Psoas muscle (tissue), 8 donors: ENCODE measurements at regions of chr1 and their contacts with region 1.

Region 1: GRCh38 chr1:47424336-47424982 is 8.4 kb downstream of the FOXE3 start:
- DNase-seq: no peak
- ATAC-seq: peak in 1 of 4 donors; percentile 37
- H3K4me3 ChIP-seq: no peak overlapping the region
- H3K27ac ChIP-seq: no peak overlapping the region
- H3K4me1 ChIP-seq: no peaks in the 10 kb centered on the region
- H3K27me3 ChIP-seq: peaks cover 0 to 18% (median 5%) of the 10 kb centered on the region in 3 donors
- CTCF ChIP-seq: peak; percentile 49

Region 2: DNA sequence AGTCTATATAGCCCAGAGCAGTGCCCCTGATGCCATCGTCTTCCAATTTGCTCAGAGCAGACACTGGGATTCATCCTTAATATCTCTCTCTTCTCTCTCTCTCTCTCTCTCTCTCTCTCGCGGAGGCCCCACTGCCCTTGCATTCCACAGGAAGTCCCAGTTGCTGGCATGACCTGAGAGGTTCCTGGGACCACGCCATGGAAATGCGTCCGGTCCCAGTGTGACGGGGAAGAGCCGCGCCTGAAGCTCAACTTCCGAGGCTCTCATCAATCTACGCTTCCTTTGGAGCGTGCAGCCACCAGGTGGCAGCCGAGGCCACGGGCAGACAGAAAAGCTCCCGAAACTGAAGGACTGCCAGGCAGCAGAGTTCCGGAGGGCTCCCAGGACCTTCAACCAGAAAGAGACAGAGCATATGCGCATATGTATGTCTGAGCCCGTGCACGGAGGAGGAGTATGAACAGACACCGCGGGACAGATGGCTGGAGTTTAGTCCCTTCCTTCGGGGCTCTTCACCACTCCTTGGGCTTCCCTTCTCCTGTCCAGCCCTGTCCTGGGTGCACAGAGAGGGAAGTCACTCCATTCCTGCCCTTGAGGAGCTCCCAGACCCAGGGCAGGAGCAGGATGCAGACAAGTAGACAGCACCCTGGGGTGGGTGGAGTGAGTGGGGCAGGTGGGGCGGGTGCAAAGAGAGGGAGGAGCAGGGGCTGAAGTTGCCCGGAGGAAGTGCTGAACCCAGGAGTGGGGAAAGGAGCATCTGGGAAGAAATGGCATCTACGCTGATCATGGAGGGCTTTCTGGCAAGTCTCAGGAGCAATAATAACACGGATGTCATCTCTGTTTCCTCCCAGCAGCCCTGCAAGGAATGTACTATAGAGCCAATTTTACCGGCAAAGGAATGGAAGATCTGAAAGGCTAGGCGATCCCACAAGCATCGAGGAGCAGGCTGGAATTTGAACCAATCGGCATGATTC is 245.2 kb before region 1 on chr1:
- intact Hi-C with region 1: loop called in 1 of 2 experiments (anchors 2 kb)
- DNase-seq: peak; percentile 93 to 94
- ATAC-seq: peak; percentile 89 to 95 (median 90)
- H3K4me3 ChIP-seq: peak overlapping the region; percentile 52
- H3K27ac ChIP-seq: no peak overlapping the region
- H3K4me1 ChIP-seq: peaks cover 6% of the 10 kb centered on the region
- H3K27me3 ChIP-seq: peaks cover 0 to 17% (median 0%) of the 10 kb centered on the region in 3 donors
- CTCF ChIP-seq: peak; percentile 89

Region 3: GRCh38 chr1:47225430-47226100 is 198.9 kb before region 1 on chr1:
- intact Hi-C with region 1: no loop called
- DNase-seq: peak in 1 of 2 donors; percentile 62
- ATAC-seq: peak; percentile 38 to 53 (median 50)
- H3K4me3 ChIP-seq: peak overlapping the region; percentile 58
- H3K27ac ChIP-seq: no peak overlapping the region
- H3K4me1 ChIP-seq: peaks cover 6% of the 10 kb centered on the region
- H3K27me3 ChIP-seq: peaks cover 0 to 100% (median 30%) of the 10 kb centered on the region in 3 donors
- CTCF ChIP-seq: no peak

Region 4: DNA sequence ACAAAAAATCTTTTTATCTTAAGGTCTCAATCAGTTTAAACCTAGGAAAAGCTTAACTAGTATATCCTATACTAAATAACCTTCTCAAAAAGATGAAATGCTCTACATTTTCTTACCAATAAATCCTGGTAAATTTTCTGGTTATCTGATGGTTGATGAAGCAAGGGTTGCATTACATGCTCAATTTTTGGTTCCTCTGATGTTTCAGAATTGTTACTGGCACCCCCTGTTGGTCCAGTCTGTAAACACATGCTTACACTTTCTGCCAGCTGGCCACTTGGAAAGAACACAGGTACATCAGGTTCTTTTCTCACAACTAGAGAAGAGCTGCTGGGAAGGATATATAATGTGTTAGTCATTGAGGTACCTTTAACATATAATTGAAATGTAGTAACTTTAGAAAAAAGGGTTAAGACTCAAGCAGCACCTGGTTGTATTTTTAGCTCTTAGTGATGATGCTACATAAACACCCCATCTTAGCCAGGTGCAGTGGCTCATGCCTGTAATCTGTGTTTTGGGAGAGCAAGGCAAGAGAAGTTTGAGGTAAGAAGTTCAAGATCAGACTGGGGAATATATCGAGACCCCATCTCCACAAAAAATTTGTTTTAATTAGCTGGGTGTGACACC is 161.6 kb before region 1 on chr1:
- intact Hi-C with region 1: no loop called
- DNase-seq: no peak
- ATAC-seq: peak in 2 of 4 donors; percentile 44 to 51
- H3K4me3 ChIP-seq: no peak overlapping the region
- H3K27ac ChIP-seq: no peak overlapping the region
- H3K4me1 ChIP-seq: no peaks in the 10 kb centered on the region
- H3K27me3 ChIP-seq: no peaks in the 10 kb centered on the region
- CTCF ChIP-seq: peak; percentile 53